ENCODE measurements at regions of chr12 and their contacts with region 1.

Region 1: DNA sequence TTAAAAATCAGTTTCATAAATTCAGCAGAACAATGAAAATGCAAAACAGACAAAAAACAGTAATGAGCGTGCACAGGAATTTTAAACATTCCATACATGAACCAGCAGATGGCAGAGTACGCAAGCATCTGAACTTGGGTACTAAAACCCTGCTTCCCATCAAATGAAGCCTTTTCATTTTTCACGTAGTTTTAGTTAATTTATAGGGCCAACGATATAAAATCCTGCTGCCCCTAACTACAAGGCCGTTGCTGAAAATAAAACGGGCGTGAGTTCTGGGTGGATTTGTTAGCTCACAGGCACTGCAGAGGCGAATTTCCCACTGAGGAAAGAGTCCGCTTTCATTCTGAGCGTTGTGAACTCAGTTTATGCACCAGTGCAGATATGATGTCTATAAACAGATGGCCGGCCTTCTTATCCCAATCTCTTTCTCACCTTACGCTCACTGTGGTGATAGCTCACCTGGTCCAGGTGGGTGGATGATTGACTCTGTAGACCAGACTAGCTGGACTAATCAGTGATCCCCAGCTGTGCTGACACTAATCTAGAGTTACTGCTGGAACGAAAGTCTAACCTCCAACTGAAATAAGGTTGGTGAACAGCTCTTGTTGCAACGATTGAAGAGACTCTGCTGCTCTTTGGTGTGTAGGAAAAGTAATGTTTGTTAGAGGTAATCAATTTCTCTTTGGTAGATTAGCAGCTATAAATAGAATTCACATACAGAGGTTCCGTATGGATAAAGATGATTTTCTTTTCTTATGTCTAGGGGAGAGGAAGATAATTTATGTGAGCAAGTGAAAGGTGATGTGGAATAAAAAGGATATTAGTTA is 89.2 kb downstream of the PDZRN4 start:
- DNase-seq: peak in 1 of 2 donors; percentile 41
- ATAC-seq: no peak
- H3K4me3 ChIP-seq: no peak overlapping the region
- H3K4me3 Mint-ChIP-seq: no peak overlapping the region
- H3K27ac ChIP-seq: no peak overlapping the region
- H3K27ac Mint-ChIP-seq: no peak overlapping the region
- H3K4me1 ChIP-seq: no peaks in the 10 kb centered on the region
- H3K4me1 Mint-ChIP-seq: no peaks in the 10 kb centered on the region
- H3K27me3 ChIP-seq: no peaks in the 10 kb centered on the region
- H3K27me3 Mint-ChIP-seq: no peaks in the 10 kb centered on the region
- CTCF ChIP-seq: peak; percentile 24

Region 2: GRCh38 chr12:41228066-41228820 is 49.1 kb before region 1 on chr12:
- intact Hi-C with region 1: no loop called
- DNase-seq: no peak
- ATAC-seq: no peak
- H3K4me3 ChIP-seq: no peak overlapping the region
- H3K4me3 Mint-ChIP-seq: no peak overlapping the region
- H3K27ac ChIP-seq: no peak overlapping the region
- H3K27ac Mint-ChIP-seq: no peak overlapping the region
- H3K4me1 ChIP-seq: no peaks in the 10 kb centered on the region
- H3K4me1 Mint-ChIP-seq: no peaks in the 10 kb centered on the region
- H3K27me3 ChIP-seq: no peaks in the 10 kb centered on the region
- H3K27me3 Mint-ChIP-seq: no peaks in the 10 kb centered on the region
- CTCF ChIP-seq: no peak

Region 3: DNA sequence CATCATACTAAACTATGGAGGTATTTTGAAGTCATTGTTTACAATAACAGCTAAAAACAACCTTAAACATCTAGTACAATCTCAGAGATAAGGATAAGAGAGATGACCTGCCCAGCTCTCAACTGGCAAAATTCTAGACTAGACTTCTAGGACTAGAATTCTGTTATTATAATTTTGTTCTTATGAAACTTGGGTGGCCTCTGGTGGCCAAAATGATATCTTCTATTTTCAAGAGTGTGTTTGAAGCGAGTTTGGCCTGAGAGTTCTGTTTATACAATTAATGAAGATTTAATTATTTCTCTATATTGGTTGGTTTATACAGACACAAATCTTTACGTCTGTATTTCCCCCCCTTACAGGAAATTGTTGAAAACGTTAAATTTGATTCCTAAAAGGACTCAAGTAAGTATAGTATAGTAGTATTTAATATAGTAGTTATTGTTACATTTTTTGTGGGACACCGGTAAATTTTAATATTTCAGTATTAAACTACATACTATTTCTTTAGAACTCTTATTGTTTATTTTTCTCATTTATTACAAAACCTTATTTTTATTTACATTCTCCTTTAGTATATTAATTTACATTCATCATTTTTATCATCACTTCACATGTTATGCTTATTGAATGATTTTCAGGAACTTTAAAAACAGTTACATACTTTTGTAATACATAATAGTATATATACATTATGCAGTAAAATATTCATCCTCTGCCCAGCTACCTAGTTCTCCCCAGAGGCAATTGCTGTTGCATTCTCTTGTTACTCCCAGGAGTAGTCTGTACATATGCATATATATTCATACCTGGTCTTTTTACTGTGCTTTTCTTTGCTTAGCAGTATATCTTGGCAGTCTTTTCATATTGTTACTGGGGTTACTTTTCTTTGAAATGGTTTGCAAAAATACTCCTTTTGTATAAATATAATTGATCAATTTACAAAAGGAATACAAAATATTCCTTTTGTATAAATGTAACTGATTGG is 1055.3 kb after region 1 on chr12:
- intact Hi-C with region 1: loop called (anchors 5 kb)
- DNase-seq: peak in 1 of 2 donors; percentile 70
- ATAC-seq: peak; percentile 63 to 70 (median 67)
- H3K4me3 ChIP-seq: no peak overlapping the region
- H3K4me3 Mint-ChIP-seq: no peak overlapping the region
- H3K27ac ChIP-seq: no peak overlapping the region
- H3K27ac Mint-ChIP-seq: peak overlapping the region in 1 of 2 donors; percentile 64
- H3K4me1 ChIP-seq: peaks cover 10% of the 10 kb centered on the region
- H3K4me1 Mint-ChIP-seq: peaks cover 49 to 54% of the 10 kb centered on the region in 2 donors
- H3K27me3 ChIP-seq: no peaks in the 10 kb centered on the region
- H3K27me3 Mint-ChIP-seq: no peaks in the 10 kb centered on the region
- CTCF ChIP-seq: peak; percentile 72